ENCODE measurements at regions of chr16 and their contacts with region 1.

Region 1: DNA sequence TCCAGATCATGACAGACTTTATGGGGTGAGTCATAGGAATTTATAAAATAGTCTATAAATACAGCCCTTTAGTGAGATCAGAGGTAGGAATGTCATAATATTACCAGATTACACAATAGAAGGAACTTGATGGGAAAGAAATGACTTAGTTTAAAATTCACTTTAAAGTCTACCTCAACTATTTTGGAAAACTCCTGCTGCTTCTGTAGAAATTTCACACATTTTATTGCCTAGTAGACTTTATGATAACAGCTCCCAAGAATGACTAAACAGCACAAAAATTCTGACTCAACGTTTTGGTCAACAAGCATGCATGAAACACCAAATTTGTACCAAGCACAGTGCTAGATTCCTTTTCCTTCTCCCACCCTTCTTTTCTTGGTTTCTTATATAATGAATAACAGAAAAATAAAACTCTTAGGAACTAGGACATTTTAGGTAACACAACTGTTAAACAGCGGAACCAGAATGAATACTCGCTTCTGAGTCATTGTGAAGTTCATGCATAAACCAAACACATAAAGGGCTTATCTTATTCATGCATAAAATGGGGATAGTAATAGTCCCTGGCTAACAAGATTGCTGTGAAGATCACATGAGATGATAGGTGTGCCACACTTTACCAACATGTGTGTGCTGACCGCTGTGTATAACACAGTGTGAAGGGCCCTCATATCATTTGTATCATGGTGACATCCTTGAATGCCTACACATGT is 243.9 kb downstream of the CDH8 start:
- DNase-seq: no peak
- ATAC-seq: no peak
- H3K4me3 ChIP-seq: no peak overlapping the region
- H3K27ac ChIP-seq: no peak overlapping the region
- H3K4me1 ChIP-seq: no peaks in the 10 kb centered on the region
- H3K27me3 ChIP-seq: no peaks in the 10 kb centered on the region
- CTCF ChIP-seq: no peak
- EP300 ChIP-seq: no peak
- POLR2A ChIP-seq: no peak
- RAD21 ChIP-seq: no peak

Region 2: DNA sequence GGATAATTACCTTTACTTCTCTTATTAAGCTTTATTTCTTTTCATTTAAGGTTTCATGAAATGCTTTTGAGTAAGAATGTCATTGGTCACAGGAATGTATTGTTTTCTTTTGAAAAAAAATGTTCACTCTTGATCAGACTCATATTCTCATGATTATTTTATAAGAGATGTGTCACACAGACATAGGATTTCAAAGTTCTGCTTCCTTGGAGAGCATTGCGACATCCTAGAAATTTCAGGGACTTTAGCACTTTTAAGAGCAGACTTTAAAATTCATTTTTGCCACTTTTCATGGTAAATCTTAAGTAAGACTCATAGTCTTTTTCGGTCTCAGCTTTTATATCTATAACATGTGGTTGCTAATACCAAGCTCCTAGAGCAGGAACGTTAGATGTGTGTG is 70.8 kb before region 1 on chr16:
- CTCF ChIA-PET with region 1: no interaction called
- POLR2A ChIA-PET with region 1: no interaction called
- in situ Hi-C with region 1: no loop called
- intact Hi-C with region 1: no loop called
- DNase-seq: no peak
- ATAC-seq: no peak
- H3K4me3 ChIP-seq: no peak overlapping the region
- H3K27ac ChIP-seq: no peak overlapping the region
- H3K4me1 ChIP-seq: no peaks in the 10 kb centered on the region
- H3K27me3 ChIP-seq: no peaks in the 10 kb centered on the region
- CTCF ChIP-seq: no peak
- EP300 ChIP-seq: no peak
- POLR2A ChIP-seq: no peak
- RAD21 ChIP-seq: no peak

Region 3: DNA sequence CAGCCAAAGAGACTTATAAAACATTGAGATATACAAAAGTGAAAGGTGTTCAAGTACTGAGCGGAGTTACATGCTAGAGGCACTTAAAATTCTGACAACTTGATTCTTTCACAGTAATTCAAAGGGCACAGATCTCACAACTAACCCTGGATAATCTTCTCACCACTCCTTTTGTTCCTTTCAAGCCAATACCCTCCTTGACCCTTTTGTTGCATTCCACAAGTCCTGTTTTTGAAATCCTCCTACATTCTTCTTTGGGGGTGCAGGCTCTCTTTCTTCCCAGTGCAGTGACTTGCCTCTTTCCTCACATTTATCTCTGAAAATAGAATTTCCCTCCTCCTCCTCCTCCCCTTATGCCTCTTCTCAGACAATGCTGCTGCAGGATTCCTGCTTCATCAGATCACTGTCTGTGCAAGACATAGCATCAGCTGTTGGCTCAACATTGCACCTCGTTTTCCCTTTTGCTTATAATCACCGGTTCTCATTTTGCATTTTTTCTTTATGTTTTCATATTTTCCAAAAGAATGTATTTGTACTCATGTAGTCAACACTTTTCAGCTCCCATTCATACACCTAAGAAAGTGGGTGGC is 44.5 kb after region 1 on chr16:
- CTCF ChIA-PET with region 1: no interaction called
- POLR2A ChIA-PET with region 1: no interaction called
- in situ Hi-C with region 1: no loop called
- intact Hi-C with region 1: no loop called
- DNase-seq: no peak
- ATAC-seq: no peak
- H3K4me3 ChIP-seq: no peak overlapping the region
- H3K27ac ChIP-seq: no peak overlapping the region
- H3K4me1 ChIP-seq: no peaks in the 10 kb centered on the region
- H3K27me3 ChIP-seq: no peaks in the 10 kb centered on the region
- CTCF ChIP-seq: no peak
- EP300 ChIP-seq: no peak
- POLR2A ChIP-seq: no peak
- RAD21 ChIP-seq: no peak

Region 4: GRCh38 chr16:61887903-61888302 is 95.6 kb after region 1 on chr16:
- CTCF ChIA-PET with region 1: no interaction called
- POLR2A ChIA-PET with region 1: no interaction called
- in situ Hi-C with region 1: loop called (anchors 25 kb)
- intact Hi-C with region 1: no loop called
- DNase-seq: no peak
- ATAC-seq: no peak
- H3K4me3 ChIP-seq: no peak overlapping the region
- H3K27ac ChIP-seq: no peak overlapping the region
- H3K4me1 ChIP-seq: no peaks in the 10 kb centered on the region
- H3K27me3 ChIP-seq: no peaks in the 10 kb centered on the region
- CTCF ChIP-seq: no peak
- EP300 ChIP-seq: no peak
- POLR2A ChIP-seq: no peak
- RAD21 ChIP-seq: no peak